ENCODE measurements at regions of chr5 and their contacts with region 1.

Region 1: GRCh38 chr5:150846654-150847333 is 473 bp downstream of the IRGM start:
- DNase-seq: peak; percentile 77
- CTCF ChIP-seq: peak; percentile 66

Region 2: DNA sequence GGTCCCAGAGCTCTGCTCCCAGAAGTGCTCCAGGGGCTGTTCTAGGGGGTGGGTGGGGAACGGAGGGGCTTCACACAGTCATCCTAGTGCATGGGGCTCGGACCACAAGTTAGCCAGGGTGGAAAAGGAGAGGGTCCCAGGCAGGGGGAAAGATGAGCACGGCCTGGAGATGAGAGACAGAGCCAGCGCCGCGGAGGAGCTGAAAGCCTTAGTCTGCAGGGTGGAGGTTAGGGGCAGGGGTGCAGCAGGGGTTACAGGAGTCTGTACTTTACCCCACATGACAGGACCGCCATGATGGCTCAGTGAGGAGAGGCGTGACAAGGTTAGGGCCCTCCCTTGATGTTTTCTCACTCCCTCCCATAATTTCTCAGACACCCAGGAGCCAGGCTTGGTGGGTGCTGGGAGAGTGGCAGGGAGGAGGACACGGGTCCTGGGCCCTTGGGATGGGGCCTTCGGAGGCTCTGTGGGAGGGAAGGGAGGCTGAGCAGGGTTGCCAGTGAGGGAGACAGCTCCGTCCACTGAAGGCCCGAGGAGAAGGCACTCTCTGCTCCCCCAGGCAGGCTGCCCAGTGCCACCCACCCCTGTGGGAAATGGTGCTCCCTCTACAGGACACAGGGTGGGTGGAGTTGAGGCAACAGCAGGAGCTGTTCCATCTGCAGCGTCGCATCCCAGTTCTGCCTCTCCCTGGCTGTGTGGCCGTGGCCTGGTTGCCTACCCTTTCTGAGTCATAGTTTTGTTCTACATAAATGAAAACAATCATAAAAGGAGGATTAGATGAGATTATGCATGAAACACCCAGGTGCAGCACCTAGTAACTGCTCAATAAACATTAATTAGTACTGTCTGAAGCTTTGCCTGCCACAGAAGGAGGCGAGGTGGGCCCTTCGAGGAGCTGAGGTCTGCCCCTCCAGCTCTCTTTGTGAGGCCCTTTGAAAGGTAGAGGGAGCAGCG is 272.7 kb before region 1 on chr5:
- CTCF ChIA-PET with region 1: interaction called, 10 read pairs
- POLR2A ChIA-PET with region 1: no interaction called
- DNase-seq: no peak
- CTCF ChIP-seq: no peak

Region 3: DNA sequence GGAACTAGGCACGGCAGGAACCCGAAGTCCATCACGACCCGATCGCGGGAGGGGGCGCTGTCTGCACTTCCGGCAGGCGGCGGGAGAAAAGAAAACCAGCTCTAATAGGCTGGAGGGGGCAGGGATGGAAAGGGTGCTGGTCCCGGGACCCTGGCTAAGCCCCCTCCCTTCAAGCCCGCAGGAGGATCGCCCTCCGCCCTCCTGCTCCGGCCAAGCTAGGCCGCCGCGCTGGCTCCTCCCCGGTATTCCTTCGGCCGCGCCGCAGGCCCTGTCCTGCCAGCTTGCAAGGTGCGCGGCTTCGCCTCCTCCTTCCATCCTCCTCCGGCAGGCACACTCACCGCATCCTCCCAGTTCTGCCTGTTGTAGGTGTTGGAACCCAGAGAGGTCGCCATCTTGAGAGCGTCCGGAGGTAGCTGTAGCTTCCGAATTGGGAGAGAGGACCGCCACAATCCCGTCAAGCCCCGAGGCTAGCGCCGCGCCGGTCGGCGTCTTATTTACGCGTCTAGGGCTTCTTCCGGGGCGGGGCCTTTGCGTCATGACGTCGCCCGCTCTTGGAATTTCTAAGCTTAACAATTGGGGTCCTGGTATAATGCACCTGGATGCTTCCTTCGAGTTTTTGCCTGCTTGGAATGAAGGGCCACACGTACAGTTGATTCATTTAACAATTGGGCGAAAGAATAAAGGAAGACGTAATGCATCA is 146.1 kb before region 1 on chr5 and contains the start of gene RBM22:
- CTCF ChIA-PET with region 1: interaction called, 21 read pairs
- POLR2A ChIA-PET with region 1: no interaction called
- DNase-seq: peak; percentile 90
- CTCF ChIP-seq: peak; percentile 71

Region 4: GRCh38 chr5:150789943-150790611 is 56.7 kb before region 1 on chr5:
- CTCF ChIA-PET with region 1: interaction called, 10 read pairs
- POLR2A ChIA-PET with region 1: no interaction called
- DNase-seq: peak; percentile 70
- CTCF ChIP-seq: no peak

Region 5: DNA sequence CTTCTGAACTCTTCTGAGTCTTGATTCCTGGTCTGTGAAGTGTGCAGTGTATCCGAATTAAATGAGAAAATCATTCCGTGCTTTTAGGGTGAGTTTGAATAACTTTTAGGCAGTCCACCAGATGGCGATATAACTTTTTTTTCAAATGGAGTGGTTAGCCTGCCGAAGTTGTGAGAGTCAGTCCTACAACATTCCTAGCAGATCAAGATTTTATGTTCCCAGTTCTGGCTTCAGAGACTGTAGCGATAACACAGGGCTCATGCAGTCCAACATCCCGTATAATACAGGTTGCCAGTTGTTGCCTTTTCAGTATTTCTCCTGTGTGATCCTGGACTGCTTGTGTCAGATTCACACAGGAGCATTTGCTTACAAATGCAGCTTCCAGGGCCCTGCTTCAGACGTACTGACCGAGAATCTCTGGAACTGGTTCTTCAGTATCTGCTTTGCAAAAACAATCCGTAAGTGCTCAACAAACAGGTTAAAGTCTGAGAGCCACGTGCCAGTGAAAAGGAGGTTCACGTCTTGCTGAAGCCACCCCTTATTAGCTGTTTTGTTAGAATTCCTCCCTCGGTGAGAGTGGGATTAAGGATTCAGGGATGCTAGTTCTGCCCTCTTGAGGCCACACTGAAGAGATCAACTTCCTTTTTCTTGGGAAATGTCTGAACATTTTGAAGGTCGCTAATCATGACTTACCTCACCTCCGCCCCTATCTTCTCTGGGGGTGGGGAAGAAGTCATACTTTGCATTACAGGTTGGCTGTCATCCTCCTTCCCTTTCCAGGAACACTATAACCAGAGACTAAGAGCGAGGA is 45.5 kb before region 1 on chr5:
- CTCF ChIA-PET with region 1: interaction called, 46 read pairs
- POLR2A ChIA-PET with region 1: no interaction called
- DNase-seq: peak; percentile 41
- CTCF ChIP-seq: peak; percentile 53

Region 6: GRCh38 chr5:150836703-150837102 is 10.1 kb before region 1 on chr5:
- CTCF ChIA-PET with region 1: interaction called, 13 read pairs
- POLR2A ChIA-PET with region 1: no interaction called
- DNase-seq: no peak
- CTCF ChIP-seq: no peak

Region 7: DNA sequence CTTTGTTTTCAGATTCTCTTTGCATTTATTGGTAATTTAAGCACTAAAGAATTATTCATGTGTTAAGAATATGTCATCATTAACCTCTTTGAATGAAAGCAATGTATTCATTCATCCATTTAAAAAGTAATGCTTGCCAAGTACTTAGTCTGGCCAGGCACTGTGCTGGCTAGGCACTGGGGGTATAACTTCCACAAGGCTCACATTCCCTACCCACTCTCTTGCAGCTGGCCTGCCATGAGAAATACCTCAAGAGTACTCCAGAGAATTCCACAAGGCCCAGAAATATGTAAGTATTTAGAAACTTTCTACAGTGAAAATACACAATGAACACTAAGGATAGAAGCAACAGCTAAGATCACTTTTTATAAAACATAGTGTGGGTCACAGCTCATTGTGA is 32.6 kb after region 1 on chr5:
- CTCF ChIA-PET with region 1: no interaction called
- POLR2A ChIA-PET with region 1: no interaction called
- DNase-seq: no peak
- CTCF ChIP-seq: no peak

Region 8: GRCh38 chr5:151051066-151051930 is 204.5 kb after region 1 on chr5:
- CTCF ChIA-PET with region 1: no interaction called
- POLR2A ChIA-PET with region 1: no interaction called
- DNase-seq: peak; percentile 79
- CTCF ChIP-seq: peak; percentile 76